ENCODE measurements at regions of chr9 and their contacts with region 1.

Region 1: GRCh38 chr9:124218438-124218982 is 39.2 kb upstream of the NEK6 start:
- DNase-seq: peak; percentile 80
- H3K4me3 ChIP-seq: no peak overlapping the region
- H3K27ac ChIP-seq: peak overlapping the region; percentile 45
- H3K4me1 ChIP-seq: peaks cover 34% of the 10 kb centered on the region
- H3K27me3 ChIP-seq: no peaks in the 10 kb centered on the region
- CTCF ChIP-seq: no peak

Region 2: GRCh38 chr9:124098141-124099090 is 120.1 kb before region 1 on chr9:
- intact Hi-C with region 1: no loop called
- DNase-seq: no peak
- H3K4me3 ChIP-seq: no peak overlapping the region
- H3K27ac ChIP-seq: no peak overlapping the region
- H3K4me1 ChIP-seq: no peaks in the 10 kb centered on the region
- H3K27me3 ChIP-seq: no peaks in the 10 kb centered on the region
- CTCF ChIP-seq: no peak

Region 3: GRCh38 chr9:124133727-124134126 is 84.8 kb before region 1 on chr9:
- intact Hi-C with region 1: loop called (anchors 10 kb)
- DNase-seq: peak; percentile 64
- H3K4me3 ChIP-seq: no peak overlapping the region
- H3K27ac ChIP-seq: no peak overlapping the region
- H3K4me1 ChIP-seq: no peaks in the 10 kb centered on the region
- H3K27me3 ChIP-seq: no peaks in the 10 kb centered on the region
- CTCF ChIP-seq: peak; percentile 12

Measured in colonic mucosa (tissue), 4 donors.